Activated T-helper 2 cell treated with anti-CD3 and anti-CD28 coated beads, Interferon-gamma antibody, Interleukin-2, Interleukin-4, amounts not matched to agents 10 μg/mL and 5 μg/mL and 100 μg/mL, durations not matched to agents 14 hours and 24 hours and 36 hours (primary cell): ENCODE measurements at regions of chr3 and their contacts with region 1.

Region 1: DNA sequence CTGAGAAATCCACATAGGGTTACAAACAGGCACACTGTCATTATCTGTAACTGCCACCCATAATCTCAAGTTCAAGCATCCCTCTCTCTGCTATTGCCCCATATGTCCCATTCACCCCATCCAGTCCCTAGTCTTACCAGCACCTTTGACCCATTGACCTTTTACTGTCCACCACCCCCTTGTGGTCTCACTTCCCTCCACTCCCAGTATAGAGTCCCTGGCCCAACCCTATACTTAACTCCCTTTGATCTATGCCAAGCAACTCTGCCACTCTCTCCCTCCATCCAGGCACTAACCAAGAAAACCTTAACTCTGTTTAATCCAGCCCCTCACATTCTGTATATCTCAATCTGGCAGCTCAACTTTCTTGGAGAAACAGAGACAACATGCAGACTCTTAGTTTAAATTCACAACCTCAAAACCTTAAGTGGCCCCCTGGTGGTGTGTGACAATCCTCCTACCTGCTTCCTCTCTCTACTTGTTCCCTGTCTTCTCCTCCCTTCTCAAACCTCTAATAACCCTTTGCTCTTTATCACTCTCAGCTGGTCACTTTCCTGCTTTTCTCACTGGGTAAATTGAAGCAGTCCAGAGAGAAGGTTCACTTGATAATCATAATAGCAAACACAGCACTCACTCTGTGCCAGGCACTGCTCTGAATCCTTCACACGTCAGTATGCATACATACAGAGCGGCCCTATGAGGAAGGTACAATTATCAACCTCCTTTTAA is 162.7 kb downstream of the STT3B start:
- DNase-seq: peak; percentile 13
- H3K4me3 Mint-ChIP-seq: no peak overlapping the region
- H3K27ac Mint-ChIP-seq: no peak overlapping the region
- H3K4me1 Mint-ChIP-seq: no peaks in the 10 kb centered on the region
- H3K27me3 Mint-ChIP-seq: peaks cover 2% of the 10 kb centered on the region

Region 2: GRCh38 chr3:31550452-31551251 is 144.8 kb before region 1 on chr3:
- intact Hi-C with region 1: loop called (anchors 5 kb)
- DNase-seq: no peak
- H3K4me3 Mint-ChIP-seq: no peak overlapping the region
- H3K27ac Mint-ChIP-seq: peak overlapping the region; percentile 11
- H3K4me1 Mint-ChIP-seq: peaks cover 66% of the 10 kb centered on the region
- H3K27me3 Mint-ChIP-seq: no peaks in the 10 kb centered on the region

Region 3: DNA sequence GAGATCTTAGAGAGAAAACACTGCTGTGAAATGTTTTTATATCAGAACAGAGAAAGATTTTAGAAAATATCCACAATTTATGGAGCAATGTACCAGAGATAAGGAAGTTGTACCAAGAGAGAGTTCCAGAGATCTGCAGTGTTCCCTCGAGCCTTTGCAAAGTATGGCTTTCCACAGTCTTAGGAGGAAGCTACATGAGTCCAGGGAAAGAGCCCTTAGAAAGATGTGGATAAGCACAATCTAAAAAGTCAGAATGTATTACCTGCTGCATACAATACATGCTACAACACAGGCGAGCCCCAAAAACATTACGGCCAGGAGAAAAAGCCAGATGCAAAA is 342.5 kb after region 1 on chr3:
- intact Hi-C with region 1: no loop called
- DNase-seq: no peak
- H3K4me3 Mint-ChIP-seq: no peak overlapping the region
- H3K27ac Mint-ChIP-seq: no peak overlapping the region
- H3K4me1 Mint-ChIP-seq: no peaks in the 10 kb centered on the region
- H3K27me3 Mint-ChIP-seq: peaks cover 12% of the 10 kb centered on the region